ENCODE measurements at regions of chr3 and their contacts with region 1.

Region 1: DNA sequence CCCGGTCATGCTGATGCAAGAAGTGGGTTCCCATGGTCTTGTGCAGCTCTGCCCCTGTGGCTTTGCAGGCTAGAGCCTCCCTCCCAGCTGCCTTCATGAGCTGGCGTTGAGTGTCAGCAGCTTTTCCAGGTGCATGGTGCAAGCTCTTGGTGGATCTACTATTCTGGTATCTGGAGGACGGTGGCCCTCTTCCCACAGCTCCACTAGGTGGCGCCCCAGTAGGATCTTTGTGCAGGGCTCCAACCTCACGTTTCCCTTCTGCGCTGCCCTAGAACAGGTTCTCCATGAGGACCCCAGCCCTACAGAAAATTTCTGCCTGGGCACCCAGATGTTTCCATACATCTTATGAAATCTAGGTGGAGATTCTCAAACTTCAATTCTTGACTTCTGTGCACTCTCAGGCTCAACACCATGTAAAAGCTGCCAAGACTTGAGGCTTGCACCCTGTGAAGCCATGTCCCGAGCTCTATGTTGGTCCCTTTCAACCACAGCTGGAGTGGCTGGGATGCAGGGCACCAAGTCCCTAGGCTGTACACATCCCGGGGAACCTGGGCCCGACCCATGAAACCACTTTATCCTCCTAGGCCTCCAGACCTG is 238.4 kb upstream of the MDFIC2 start:
- DNase-seq: peak; percentile 44 to 79 (median 69)
- ATAC-seq: peak; percentile 84
- H3K4me3 ChIP-seq: no peak overlapping the region
- H3K4me3 Mint-ChIP-seq: no peak overlapping the region
- H3K27ac ChIP-seq: no peak overlapping the region
- H3K27ac Mint-ChIP-seq: no peak overlapping the region
- H3K4me1 ChIP-seq: no peaks in the 10 kb centered on the region
- H3K4me1 Mint-ChIP-seq: peaks cover 0 to 1% (median 0%) of the 10 kb centered on the region in 7 donors
- H3K27me3 ChIP-seq: no peaks in the 10 kb centered on the region
- H3K27me3 Mint-ChIP-seq: peaks cover 0 to 13% (median 0%) of the 10 kb centered on the region in 5 donors

Region 2: DNA sequence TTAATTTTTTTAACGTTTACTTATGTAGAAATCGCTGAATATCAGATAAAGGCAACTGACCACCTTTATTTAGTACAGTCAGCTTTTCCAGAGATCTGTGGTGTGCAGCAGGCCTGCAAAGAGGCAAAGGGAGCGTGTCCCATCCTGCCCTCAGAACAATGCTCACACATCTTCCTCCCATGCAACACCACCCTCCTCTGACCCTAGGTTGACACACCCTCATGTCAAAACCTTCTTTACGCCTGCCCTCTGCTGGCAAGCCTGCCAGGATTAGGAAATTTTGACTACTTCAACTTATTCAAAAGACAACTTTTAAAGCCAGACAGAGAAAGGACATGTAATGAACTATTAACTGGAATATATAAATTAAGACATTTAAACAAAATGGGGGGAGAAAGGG is 519.0 kb after region 1 on chr3:
- CTCF ChIA-PET with region 1: interaction called, 4 read pairs
- POLR2A ChIA-PET with region 1: no interaction called
- intact Hi-C with region 1: loop called (anchors 1 to 2 kb)
- DNase-seq: peak; percentile 26 to 72 (median 68)
- ATAC-seq: peak; percentile 60
- H3K4me3 ChIP-seq: no peak overlapping the region
- H3K4me3 Mint-ChIP-seq: peak overlapping the region in 7 of 10 donors; percentile 1 to 52 (median 37)
- H3K27ac ChIP-seq: peak overlapping the region; percentile 34
- H3K27ac Mint-ChIP-seq: peak overlapping the region in 8 of 9 donors; percentile 76 to 91 (median 84)
- H3K4me1 ChIP-seq: peaks cover 44 to 81% of the 10 kb centered on the region in 2 donors
- H3K4me1 Mint-ChIP-seq: peaks cover 55 to 90% (median 86%) of the 10 kb centered on the region in 7 donors
- H3K27me3 ChIP-seq: no peaks in the 10 kb centered on the region
- H3K27me3 Mint-ChIP-seq: no peaks in the 10 kb centered on the region

Region 3: DNA sequence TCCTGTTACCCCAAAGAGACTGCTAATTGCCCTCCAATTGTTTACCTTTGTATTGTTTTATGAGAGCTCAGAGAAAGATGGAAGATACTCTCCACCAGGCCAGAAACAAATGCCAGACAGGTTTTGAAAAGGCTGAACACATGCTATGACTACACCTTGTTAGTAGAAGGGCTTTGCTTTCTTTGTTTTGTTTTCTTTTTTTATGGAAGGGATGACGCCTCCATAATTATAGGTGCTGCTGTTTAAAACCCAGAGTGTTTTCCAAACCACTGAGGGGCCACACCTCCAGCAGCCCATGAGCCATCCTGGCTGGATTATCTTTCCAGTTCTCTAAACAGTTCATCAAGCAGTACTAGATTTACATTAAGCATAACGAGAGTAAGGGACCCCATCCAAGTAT is 1038.3 kb after region 1 on chr3:
- CTCF ChIA-PET with region 1: interaction called, 46 read pairs
- POLR2A ChIA-PET with region 1: interaction called, 3 read pairs
- intact Hi-C with region 1: loop called (anchors 1 kb)
- DNase-seq: no peak
- ATAC-seq: no peak
- H3K4me3 ChIP-seq: no peak overlapping the region
- H3K4me3 Mint-ChIP-seq: no peak overlapping the region
- H3K27ac ChIP-seq: no peak overlapping the region
- H3K27ac Mint-ChIP-seq: peak overlapping the region in 4 of 9 donors; percentile 1 to 31 (median 21)
- H3K4me1 ChIP-seq: peaks cover 7 to 16% of the 10 kb centered on the region in 2 donors
- H3K4me1 Mint-ChIP-seq: peaks cover 2 to 22% (median 19%) of the 10 kb centered on the region in 7 donors
- H3K27me3 ChIP-seq: no peaks in the 10 kb centered on the region
- H3K27me3 Mint-ChIP-seq: peaks cover 0 to 8% (median 0%) of the 10 kb centered on the region in 5 donors

Region 4: GRCh38 chr3:71652781-71653413 is 1102.1 kb after region 1 on chr3:
- CTCF ChIA-PET with region 1: interaction called, 3 read pairs
- POLR2A ChIA-PET with region 1: no interaction called
- intact Hi-C with region 1: loop called in 1 of 2 experiments (anchors 1 kb)
- DNase-seq: peak in 6 of 9 donors; percentile 3 to 42 (median 23)
- ATAC-seq: peak; percentile 53
- H3K4me3 ChIP-seq: no peak overlapping the region
- H3K4me3 Mint-ChIP-seq: peak overlapping the region in 1 of 10 donors; percentile 23
- H3K27ac ChIP-seq: no peak overlapping the region
- H3K27ac Mint-ChIP-seq: no peak overlapping the region
- H3K4me1 ChIP-seq: no peaks in the 10 kb centered on the region
- H3K4me1 Mint-ChIP-seq: peaks cover 0 to 5% (median 0%) of the 10 kb centered on the region in 7 donors
- H3K27me3 ChIP-seq: no peaks in the 10 kb centered on the region
- H3K27me3 Mint-ChIP-seq: no peaks in the 10 kb centered on the region

Region 5: GRCh38 chr3:71681224-71681668 is 1130.4 kb after region 1 on chr3:
- CTCF ChIA-PET with region 1: interaction called, 4 read pairs
- POLR2A ChIA-PET with region 1: no interaction called
- intact Hi-C with region 1: loop called in 1 of 2 experiments (anchors 1 kb)
- DNase-seq: peak in 6 of 9 donors; percentile 12 to 54 (median 18)
- ATAC-seq: peak; percentile 60
- H3K4me3 ChIP-seq: no peak overlapping the region
- H3K4me3 Mint-ChIP-seq: no peak overlapping the region
- H3K27ac ChIP-seq: no peak overlapping the region
- H3K27ac Mint-ChIP-seq: peak overlapping the region in 4 of 9 donors; percentile 48 to 86 (median 60)
- H3K4me1 ChIP-seq: no peaks in the 10 kb centered on the region
- H3K4me1 Mint-ChIP-seq: peaks cover 0 to 22% (median 10%) of the 10 kb centered on the region in 7 donors
- H3K27me3 ChIP-seq: no peaks in the 10 kb centered on the region
- H3K27me3 Mint-ChIP-seq: no peaks in the 10 kb centered on the region

Measured in naive thymus-derived CD4-positive, alpha-beta T cell (primary cell).